ENCODE measurements at regions of chr11 and their contacts with region 1.

Region 1: GRCh38 chr11:15006139-15006759 is 34.1 kb upstream of the CALCA start:
- DNase-seq: no peak
- ATAC-seq: peak; percentile 88
- H3K4me3 Mint-ChIP-seq: no peak overlapping the region
- H3K27ac Mint-ChIP-seq: no peak overlapping the region
- H3K4me1 Mint-ChIP-seq: no peaks in the 10 kb centered on the region
- H3K27me3 Mint-ChIP-seq: no peaks in the 10 kb centered on the region
- CTCF ChIP-seq: peak; percentile 20; the same call in 1 of the 2 replicates

Region 2: DNA sequence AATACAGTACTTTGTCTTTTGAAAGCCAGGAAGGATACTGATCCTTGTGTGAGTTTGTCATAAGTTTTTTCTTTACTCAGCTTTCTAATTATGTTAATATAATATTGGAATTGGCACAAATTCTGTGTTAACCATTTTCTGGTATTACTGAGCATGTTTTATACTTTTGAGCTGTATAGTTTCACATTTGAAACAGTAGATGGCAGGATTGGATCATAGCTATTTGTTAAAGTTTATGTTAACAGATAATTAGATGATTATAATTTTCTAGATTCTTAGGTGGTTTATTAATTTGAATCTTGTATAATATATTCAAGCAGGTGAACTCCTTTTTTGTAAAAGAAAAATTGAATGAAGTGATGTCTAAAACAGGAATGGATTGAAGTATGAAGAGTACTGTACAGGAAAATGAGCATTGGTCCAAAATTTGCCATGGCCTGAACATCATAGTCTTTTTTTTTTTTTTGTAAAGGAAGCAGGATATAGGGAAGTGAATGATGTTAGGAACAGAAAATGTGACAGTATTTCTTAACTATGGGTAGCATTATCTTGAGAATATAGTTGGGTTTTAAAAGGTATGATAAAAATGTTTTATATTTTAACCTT is 216.3 kb before region 1 on chr11:
- CTCF ChIA-PET with region 1: interaction called, 11 read pairs
- POLR2A ChIA-PET with region 1: no interaction called
- DNase-seq: no peak
- ATAC-seq: no peak
- H3K4me3 Mint-ChIP-seq: no peak overlapping the region
- H3K27ac Mint-ChIP-seq: no peak overlapping the region
- H3K4me1 Mint-ChIP-seq: peaks cover 4% of the 10 kb centered on the region; the same call in 1 of the 2 replicates
- H3K27me3 Mint-ChIP-seq: no peaks in the 10 kb centered on the region; the same call in 1 of the 2 replicates
- CTCF ChIP-seq: no peak

Region 3: GRCh38 chr11:15038963-15039362 is 32.7 kb after region 1 on chr11:
- CTCF ChIA-PET with region 1: interaction called, 14 read pairs
- POLR2A ChIA-PET with region 1: no interaction called
- DNase-seq: no peak
- ATAC-seq: no peak
- H3K4me3 Mint-ChIP-seq: no peak overlapping the region
- H3K27ac Mint-ChIP-seq: no peak overlapping the region
- H3K4me1 Mint-ChIP-seq: peaks cover 27% of the 10 kb centered on the region
- H3K27me3 Mint-ChIP-seq: no peaks in the 10 kb centered on the region
- CTCF ChIP-seq: no peak

Measured in WTC11 (cell line).